Caco-2 (cell line): ENCODE measurements at regions of chr19 and their contacts with region 1.

Region 1: DNA sequence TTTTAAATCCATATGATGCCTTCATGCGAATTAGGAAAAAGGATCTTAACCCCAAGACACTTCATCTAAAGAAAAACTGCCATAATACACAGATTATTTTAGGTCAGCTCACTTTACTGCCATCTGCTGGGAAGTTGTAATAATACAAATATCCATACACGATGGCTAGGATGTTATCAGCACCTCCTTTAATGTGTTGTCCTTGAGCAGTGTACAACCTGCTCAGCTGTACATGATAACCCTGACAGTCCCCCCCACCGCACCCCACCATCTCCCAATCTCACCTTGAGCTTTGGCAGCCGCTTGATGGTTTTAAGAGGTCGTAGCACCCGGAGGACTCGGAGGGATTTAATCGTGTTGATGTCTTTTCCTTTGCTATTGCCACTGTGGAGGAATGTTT is 112.2 kb downstream of the IER2 start:
- DNase-seq: peak in 1 of 2 experiments; percentile 43
- H3K4me3 ChIP-seq: no peak overlapping the region
- H3K4me3 Mint-ChIP-seq: no peak overlapping the region
- H3K27ac Mint-ChIP-seq: no peak overlapping the region
- H3K4me1 ChIP-seq: peaks cover 6% of the 10 kb centered on the region; the same call in 1 of the 2 replicates
- H3K4me1 Mint-ChIP-seq: no peaks in the 10 kb centered on the region
- H3K27me3 ChIP-seq: no peaks in the 10 kb centered on the region; the same call in 1 of the 2 replicates
- H3K27me3 Mint-ChIP-seq: peaks cover 14% of the 10 kb centered on the region
- CTCF ChIP-seq: peak; percentile 39 to 47

Region 2: DNA sequence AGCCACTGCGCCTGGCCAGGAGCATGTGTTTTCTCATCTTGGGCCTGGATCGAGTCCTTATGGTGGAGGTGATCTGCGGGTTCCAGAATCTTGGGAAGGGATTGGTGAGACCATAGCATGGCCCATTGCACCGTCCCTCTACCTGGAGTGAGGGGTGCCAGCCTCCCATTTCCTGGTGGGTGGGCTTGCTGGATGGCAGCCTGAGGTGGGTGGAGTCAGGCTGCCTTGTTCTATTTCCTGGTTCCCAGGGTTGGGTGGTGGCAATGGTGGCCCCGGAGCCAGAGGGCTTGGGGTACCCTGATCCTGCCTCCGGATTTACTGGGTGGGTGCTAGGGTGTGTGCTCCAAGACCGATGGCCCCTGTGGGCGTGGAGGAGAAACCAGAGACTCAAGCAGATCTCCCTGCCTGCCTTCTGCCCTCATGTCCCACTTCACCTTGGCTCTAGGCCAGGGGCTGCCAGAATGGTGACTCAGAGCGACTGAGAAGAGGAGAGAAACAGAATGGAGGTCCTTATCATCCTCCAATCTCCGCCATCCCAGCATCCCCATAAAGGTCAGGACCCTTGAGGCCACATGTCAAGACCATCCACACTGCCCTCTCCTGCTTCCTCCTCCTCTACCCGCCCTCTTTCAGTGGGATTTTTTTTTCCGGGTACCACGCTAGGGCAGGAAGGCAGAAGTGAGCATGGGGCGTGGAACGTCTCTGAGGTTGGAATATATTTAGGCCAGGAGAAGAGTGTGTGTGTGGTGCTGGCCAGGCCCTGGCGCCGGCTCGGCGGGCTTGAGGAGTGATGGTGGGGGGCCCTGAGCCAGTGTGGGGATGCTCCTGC is 90.2 kb before region 1 on chr19:
- CTCF ChIA-PET with region 1: no interaction called
- POLR2A ChIA-PET with region 1: no interaction called
- intact Hi-C with region 1: no loop called
- DNase-seq: no peak
- H3K4me3 ChIP-seq: no peak overlapping the region
- H3K4me3 Mint-ChIP-seq: no peak overlapping the region
- H3K27ac Mint-ChIP-seq: no peak overlapping the region
- H3K4me1 ChIP-seq: peaks cover 26% of the 10 kb centered on the region
- H3K4me1 Mint-ChIP-seq: peaks cover 13% of the 10 kb centered on the region
- H3K27me3 ChIP-seq: no peaks in the 10 kb centered on the region
- H3K27me3 Mint-ChIP-seq: no peaks in the 10 kb centered on the region
- CTCF ChIP-seq: no peak

Region 3: DNA sequence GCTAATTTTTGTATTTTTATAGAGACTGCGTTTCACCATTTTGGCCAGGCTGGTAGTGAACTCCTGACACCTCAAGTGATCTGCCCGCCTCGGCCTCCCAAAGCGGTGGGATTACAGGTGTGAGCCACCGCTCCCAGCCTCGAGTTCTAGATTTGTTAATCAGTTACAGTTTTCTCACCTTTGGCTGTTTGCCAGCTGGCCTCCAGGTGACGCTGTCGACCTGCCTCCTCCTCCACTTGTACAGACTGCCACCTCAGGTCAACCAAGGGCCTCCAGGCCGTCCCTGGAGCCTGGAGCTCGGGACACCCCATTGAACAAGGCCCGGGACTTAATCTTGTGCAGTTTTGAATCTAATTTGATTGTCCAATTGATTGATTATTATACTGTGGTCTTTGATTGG is 66.8 kb before region 1 on chr19:
- CTCF ChIA-PET with region 1: interaction called, 13 read pairs
- POLR2A ChIA-PET with region 1: no interaction called
- intact Hi-C with region 1: loop called (anchors 1 kb)
- DNase-seq: peak; percentile 43 to 58
- H3K4me3 ChIP-seq: no peak overlapping the region
- H3K4me3 Mint-ChIP-seq: no peak overlapping the region
- H3K27ac Mint-ChIP-seq: no peak overlapping the region
- H3K4me1 ChIP-seq: no peaks in the 10 kb centered on the region
- H3K4me1 Mint-ChIP-seq: no peaks in the 10 kb centered on the region
- H3K27me3 ChIP-seq: no peaks in the 10 kb centered on the region
- H3K27me3 Mint-ChIP-seq: no peaks in the 10 kb centered on the region
- CTCF ChIP-seq: peak in 1 of 2 experiments; percentile 48